ENCODE measurements at regions of chr17 and their contacts with region 1.

Region 1: GRCh38 chr17:7561028-7561575 is 617 bp upstream of the SENP3 start:
- DNase-seq: peak; percentile 93
- ATAC-seq: peak; percentile 76
- H3K4me3 Mint-ChIP-seq: peak overlapping the region; percentile 85
- H3K27ac Mint-ChIP-seq: peak overlapping the region; percentile 91
- H3K4me1 Mint-ChIP-seq: peaks cover 52% of the 10 kb centered on the region
- H3K27me3 Mint-ChIP-seq: no peaks in the 10 kb centered on the region
- CTCF ChIP-seq: peak; percentile 79

Region 2: DNA sequence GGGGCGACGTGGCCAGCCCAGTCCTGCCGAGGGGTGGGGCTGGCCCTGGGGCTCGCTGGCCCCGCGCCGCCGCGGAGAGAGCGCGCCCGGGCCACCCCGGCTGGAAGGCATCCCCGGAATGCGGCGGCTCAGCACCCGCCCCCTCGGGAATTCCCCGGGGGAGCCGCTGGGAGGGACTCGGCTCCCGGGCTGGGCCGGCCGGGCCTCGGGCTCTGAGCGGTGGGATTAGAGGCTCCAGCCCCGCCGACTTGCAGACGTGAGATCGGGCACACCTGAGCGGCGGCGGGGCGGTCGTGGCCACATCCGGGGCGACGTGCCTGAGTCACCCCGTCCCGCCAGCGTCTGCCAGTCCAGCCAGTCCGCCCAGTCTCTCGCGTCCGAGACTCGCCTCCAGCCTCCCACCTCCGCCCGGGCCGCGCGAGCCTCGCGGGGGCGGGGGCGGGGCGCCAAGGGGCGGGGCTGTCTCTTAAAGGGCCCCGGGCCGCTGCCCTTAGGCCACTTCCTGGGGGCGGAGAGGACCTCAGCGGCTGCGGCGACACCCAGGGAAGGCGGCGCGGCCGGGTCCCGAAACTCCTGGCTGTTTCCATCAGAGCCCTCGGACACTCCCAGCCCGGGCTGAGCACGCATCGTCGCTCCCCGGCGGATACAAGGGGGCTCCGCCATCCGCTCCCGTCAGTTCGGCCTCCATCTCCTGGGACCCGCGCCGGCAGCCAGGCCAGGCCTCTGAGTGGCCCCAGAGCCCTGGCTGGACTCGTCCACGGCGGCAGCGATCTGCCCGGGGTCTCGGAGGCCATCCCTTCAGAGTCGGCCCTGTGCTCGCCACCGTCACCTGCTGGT is 209.2 kb before region 1 on chr17 and contains the start of gene KCTD11:
- CTCF ChIA-PET with region 1: interaction called, 24 read pairs
- POLR2A ChIA-PET with region 1: interaction called, 3 read pairs
- intact Hi-C with region 1: loop called (anchors 10 kb)
- DNase-seq: peak; percentile 90
- ATAC-seq: peak; percentile 46
- H3K4me3 Mint-ChIP-seq: peak within 1 kb of the TSS; percentile 87
- H3K27ac Mint-ChIP-seq: peak within 1 kb of the TSS; percentile 87
- H3K4me1 Mint-ChIP-seq: peaks cover 57% of the 10 kb centered on the region
- H3K27me3 Mint-ChIP-seq: no peaks in the 10 kb centered on the region
- CTCF ChIP-seq: no peak
- total RNA-seq, gene KCTD11: 11.0 to 11.2 TPM

Region 3: DNA sequence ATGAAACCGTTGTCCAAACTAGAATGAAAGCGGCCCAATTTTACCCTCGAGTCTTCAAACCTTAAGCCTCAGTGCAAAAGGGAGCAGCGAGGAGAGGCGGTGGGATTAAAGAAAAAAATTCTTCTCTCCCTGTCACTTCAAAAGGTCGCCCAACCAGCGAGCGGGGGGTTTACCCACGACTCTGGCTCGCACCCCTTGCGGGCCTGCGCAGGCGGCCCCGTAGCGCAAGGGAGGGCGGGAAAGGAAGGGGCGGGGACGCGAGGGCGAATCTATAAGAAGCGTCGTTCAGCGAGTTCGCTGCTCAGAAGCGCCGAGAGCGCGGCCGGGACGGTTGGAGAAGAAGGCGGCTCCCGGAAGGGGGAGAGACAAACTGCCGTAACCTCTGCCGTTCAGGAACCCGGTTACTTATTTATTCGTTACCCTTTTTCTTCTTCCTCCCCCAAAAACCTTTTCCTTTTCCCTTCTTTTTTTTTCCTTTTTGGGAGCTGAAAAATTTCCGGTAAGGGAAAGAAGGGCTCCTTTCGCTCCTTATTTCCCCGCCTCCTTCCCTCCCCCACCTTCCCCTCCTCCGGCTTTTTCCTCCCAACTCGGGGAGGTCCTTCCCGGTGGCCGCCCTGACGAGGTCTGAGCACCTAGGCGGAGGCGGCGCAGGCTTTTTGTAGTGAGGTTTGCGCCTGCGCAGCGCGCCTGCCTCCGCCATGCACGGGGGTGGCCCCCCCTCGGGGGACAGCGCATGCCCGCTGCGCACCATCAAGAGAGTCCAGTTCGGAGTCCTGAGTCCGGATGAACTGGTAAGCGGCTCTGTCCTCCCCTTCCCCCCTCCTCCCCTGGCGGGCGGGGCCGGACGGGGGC is 76.8 kb before region 1 on chr17 and contains the start of gene POLR2A:
- CTCF ChIA-PET with region 1: interaction called, 14 read pairs
- POLR2A ChIA-PET with region 1: interaction called, 19 read pairs
- intact Hi-C with region 1: no loop called
- DNase-seq: peak; percentile 96
- ATAC-seq: peak; percentile 67
- H3K4me3 Mint-ChIP-seq: peak within 1 kb of the TSS; percentile 96
- H3K27ac Mint-ChIP-seq: peak within 1 kb of the TSS; percentile 99
- H3K4me1 Mint-ChIP-seq: peaks cover 63% of the 10 kb centered on the region
- H3K27me3 Mint-ChIP-seq: no peaks in the 10 kb centered on the region
- CTCF ChIP-seq: no peak
- total RNA-seq, gene POLR2A: 219 to 223 TPM

Region 4: GRCh38 chr17:7515911-7516610 is 45.0 kb before region 1 on chr17:
- CTCF ChIA-PET with region 1: interaction called, 186 read pairs
- POLR2A ChIA-PET with region 1: interaction called, 23 read pairs
- intact Hi-C with region 1: loop called (anchors 5 kb)
- DNase-seq: no peak
- ATAC-seq: no peak
- H3K4me3 Mint-ChIP-seq: no peak overlapping the region
- H3K27ac Mint-ChIP-seq: no peak overlapping the region
- H3K4me1 Mint-ChIP-seq: no peaks in the 10 kb centered on the region
- H3K27me3 Mint-ChIP-seq: no peaks in the 10 kb centered on the region
- CTCF ChIP-seq: no peak

Region 5: DNA sequence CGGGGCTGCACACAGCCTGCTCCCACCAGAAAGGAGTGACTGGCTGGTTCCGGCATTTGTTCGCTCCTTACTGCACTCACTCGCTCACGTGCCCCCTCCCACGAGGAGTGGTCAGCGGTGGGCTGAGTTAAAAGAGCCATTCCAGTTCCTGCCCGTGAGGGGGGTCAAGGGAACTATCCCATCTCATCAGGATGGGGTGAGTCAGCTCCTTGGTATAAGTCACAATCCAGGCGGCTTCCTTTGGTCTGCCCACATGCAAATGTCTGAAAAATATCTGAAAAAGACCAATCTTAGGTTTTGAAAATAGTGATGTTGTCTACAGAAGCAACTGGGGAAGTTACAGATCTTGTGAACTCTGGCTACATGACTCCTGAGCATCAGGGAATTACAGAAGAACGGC is 22.2 kb before region 1 on chr17:
- CTCF ChIA-PET with region 1: interaction called, 17 read pairs
- POLR2A ChIA-PET with region 1: interaction called, 5 read pairs
- intact Hi-C with region 1: no loop called
- DNase-seq: no peak
- ATAC-seq: no peak
- H3K4me3 Mint-ChIP-seq: no peak overlapping the region
- H3K27ac Mint-ChIP-seq: no peak overlapping the region
- H3K4me1 Mint-ChIP-seq: no peaks in the 10 kb centered on the region
- H3K27me3 Mint-ChIP-seq: no peaks in the 10 kb centered on the region
- CTCF ChIP-seq: no peak

Region 6: DNA sequence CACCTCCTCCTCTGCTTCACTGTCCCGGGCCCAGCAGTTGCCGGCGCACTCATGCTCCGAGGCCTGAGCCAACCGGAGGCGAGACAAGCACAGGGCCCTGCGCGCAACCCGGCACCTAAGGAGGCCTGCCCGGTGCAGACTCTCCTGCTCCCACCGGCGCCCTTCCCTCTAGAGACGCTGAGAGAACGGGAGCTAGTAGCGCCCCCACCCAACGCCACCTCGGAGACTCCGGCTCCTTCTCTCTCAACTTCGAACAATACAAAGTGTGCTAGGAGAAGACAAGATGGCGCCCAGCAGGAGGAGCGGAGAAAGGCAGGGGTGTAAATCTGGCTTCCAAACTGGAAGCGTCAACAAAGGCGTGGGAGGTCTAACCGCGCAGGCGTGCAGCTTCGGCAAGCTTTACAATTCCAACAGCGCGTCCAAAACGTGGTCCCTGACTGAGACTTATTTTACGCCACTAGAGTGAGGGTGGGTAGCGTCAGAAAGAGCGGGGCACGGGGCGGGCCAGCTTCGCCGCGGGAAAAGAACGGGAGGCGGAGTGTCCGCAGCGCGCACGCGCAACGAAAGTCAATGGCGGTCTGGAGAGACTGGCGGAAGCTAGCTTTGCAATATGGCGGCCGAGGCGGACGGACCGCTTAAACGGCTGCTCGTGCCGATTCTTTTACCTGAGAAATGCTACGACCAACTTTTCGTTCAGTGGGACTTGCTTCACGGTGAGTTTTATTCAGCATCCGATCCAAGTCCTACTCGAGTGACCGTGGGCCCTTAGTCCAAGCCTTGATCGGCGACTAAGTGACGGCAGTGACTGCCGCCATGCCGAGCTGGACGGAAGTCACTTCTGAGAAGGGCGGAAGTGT is 22.4 kb after region 1 on chr17 and contains the start of gene MPDU1:
- CTCF ChIA-PET with region 1: interaction called, 20 read pairs
- POLR2A ChIA-PET with region 1: interaction called, 17 read pairs
- intact Hi-C with region 1: no loop called
- DNase-seq: peak; percentile 97
- ATAC-seq: peak; percentile 77
- H3K4me3 Mint-ChIP-seq: peak within 1 kb of the TSS; percentile 94
- H3K27ac Mint-ChIP-seq: peak within 1 kb of the TSS; percentile 99
- H3K4me1 Mint-ChIP-seq: peaks cover 55% of the 10 kb centered on the region
- H3K27me3 Mint-ChIP-seq: no peaks in the 10 kb centered on the region
- CTCF ChIP-seq: no peak
- total RNA-seq, gene MPDU1: 50.9 to 51.4 TPM

Measured in activated CD8-positive, alpha-beta T cell treated with anti-CD3 and anti-CD28 coated beads for 36 hours (primary cell).